ENCODE measurements at regions of chr22 and their contacts with region 1.

Region 1: GRCh38 chr22:25120093-25120561 is 79.5 kb upstream of the CRYBB3 start:
- DNase-seq: peak; percentile 64
- H3K4me3 ChIP-seq: peak overlapping the region in 1 of 3 experiments; percentile 25
- H3K27ac ChIP-seq: peak overlapping the region; percentile 100
- H3K4me1 ChIP-seq: peaks cover 38% of the 10 kb centered on the region
- H3K27me3 ChIP-seq: no peaks in the 10 kb centered on the region
- CTCF ChIP-seq: no peak
- POLR2A ChIP-seq: no peak

Region 2: DNA sequence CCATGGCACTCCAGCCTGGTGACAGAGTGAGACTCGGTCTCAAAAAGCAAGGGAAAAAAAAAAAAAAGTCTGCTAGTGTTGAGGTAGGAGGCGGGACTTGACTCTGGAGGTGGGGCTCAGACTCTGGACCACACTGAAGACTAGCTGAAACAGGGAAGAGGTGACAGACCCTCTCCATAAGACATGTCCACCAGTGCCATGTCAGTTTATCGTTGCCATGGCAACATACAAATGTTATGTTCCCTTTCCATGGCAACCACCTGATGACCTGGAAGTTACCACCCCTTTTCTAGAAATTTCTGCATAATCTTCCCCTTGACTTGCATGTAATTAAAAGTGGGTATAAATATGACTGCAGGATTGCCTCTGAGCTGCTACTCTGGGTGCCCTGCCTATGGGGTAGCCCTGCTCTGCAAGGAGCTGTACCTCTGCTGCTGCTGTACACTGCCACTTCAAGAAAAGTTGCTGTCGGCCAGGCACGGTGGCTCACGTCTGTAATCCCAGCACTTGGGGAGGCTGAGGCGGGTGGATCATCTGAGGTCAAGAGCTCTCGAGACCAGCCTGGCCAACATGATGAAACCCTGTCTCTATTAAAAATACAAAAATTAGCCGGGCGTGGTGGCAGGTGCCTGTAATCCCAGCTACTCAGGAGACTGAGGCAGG is 112.6 kb before region 1 on chr22:
- CTCF ChIA-PET with region 1: no interaction called
- POLR2A ChIA-PET with region 1: no interaction called
- dilution Hi-C with region 1: no loop called
- intact Hi-C with region 1: no loop called
- DNase-seq: no peak
- H3K4me3 ChIP-seq: no peak overlapping the region
- H3K27ac ChIP-seq: no peak overlapping the region
- H3K4me1 ChIP-seq: peaks cover 4% of the 10 kb centered on the region
- H3K27me3 ChIP-seq: no peaks in the 10 kb centered on the region
- CTCF ChIP-seq: no peak
- POLR2A ChIP-seq: no peak

Region 3: GRCh38 chr22:25091458-25091857 is 28.7 kb before region 1 on chr22:
- CTCF ChIA-PET with region 1: no interaction called
- POLR2A ChIA-PET with region 1: no interaction called
- dilution Hi-C with region 1: no loop called
- intact Hi-C with region 1: loop called (anchors 1 kb)
- DNase-seq: peak; percentile 82
- H3K4me3 ChIP-seq: no peak overlapping the region
- H3K27ac ChIP-seq: peak overlapping the region; percentile 25
- H3K4me1 ChIP-seq: peaks cover 37% of the 10 kb centered on the region
- H3K27me3 ChIP-seq: no peaks in the 10 kb centered on the region
- CTCF ChIP-seq: no peak
- POLR2A ChIP-seq: no peak

Region 4: DNA sequence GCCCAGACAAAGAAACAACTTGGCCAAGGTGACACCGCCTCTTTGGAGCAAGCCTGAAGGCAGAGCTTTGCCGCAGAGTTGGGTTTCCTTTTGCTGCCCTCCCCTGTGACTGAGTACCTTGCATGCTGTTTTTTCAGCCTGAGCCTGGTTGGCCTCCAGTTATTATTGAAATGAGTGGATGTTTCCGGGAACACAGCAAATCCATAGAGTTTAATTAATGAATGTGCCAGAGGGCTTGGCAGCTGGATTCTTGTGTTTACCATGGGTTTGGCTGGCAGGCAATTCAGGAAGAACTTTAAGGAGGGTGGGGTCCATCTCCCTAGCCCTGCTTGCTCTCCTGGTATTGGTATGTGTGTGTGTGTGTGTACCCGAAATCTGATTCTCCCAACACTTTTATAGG is 13.9 kb after region 1 on chr22:
- CTCF ChIA-PET with region 1: interaction called, 6 read pairs
- POLR2A ChIA-PET with region 1: interaction called, 3 read pairs
- dilution Hi-C with region 1: no loop called
- intact Hi-C with region 1: loop called (anchors 1 kb)
- DNase-seq: peak; percentile 95
- H3K4me3 ChIP-seq: no peak overlapping the region
- H3K27ac ChIP-seq: peak overlapping the region; percentile 36
- H3K4me1 ChIP-seq: peaks cover 23% of the 10 kb centered on the region
- H3K27me3 ChIP-seq: no peaks in the 10 kb centered on the region
- CTCF ChIP-seq: no peak
- POLR2A ChIP-seq: peak; percentile 61

Region 5: GRCh38 chr22:26483439-26484359 is 1363.6 kb after region 1 on chr22 and contains the starts of genes HPS4 and SRRD:
- CTCF ChIA-PET with region 1: no interaction called
- POLR2A ChIA-PET with region 1: no interaction called
- dilution Hi-C with region 1: no loop called
- intact Hi-C with region 1: loop called (anchors 5 kb)
- DNase-seq: peak; percentile 89
- H3K4me3 ChIP-seq: peak within 1 kb of the TSS; percentile 80 to 97 (median 92)
- H3K27ac ChIP-seq: peak within 1 kb of the TSS; percentile 86
- H3K4me1 ChIP-seq: peaks cover 23% of the 10 kb centered on the region
- H3K27me3 ChIP-seq: no peaks in the 10 kb centered on the region
- CTCF ChIP-seq: no peak
- POLR2A ChIP-seq: peak; percentile 83
- total RNA-seq, gene HPS4: 29.7 and 34.9 TPM in 2 replicates
- total RNA-seq, gene SRRD: 24.2 and 28.5 TPM in 2 replicates

Measured in endothelial cell of umbilical vein (primary cell).